Natural killer cell (primary cell): ENCODE measurements at regions of chr6 and their contacts with region 1.

Region 1: GRCh38 chr6:159098636-159099106 is 53.9 kb upstream of the TAGAP start:
- DNase-seq: peak; percentile 56 to 92
- ATAC-seq: peak; percentile 88 to 89 (median 89)
- H3K4me3 ChIP-seq: no peak overlapping the region
- H3K4me3 Mint-ChIP-seq: peak overlapping the region; percentile 61
- H3K27ac ChIP-seq: peak overlapping the region; percentile 92
- H3K27ac Mint-ChIP-seq: peak overlapping the region; percentile 94 to 99
- H3K4me1 ChIP-seq: peaks cover 42% of the 10 kb centered on the region
- H3K4me1 Mint-ChIP-seq: peaks cover 26 to 31% of the 10 kb centered on the region in 2 donors
- H3K27me3 ChIP-seq: no peaks in the 10 kb centered on the region
- H3K27me3 Mint-ChIP-seq: no peaks in the 10 kb centered on the region
- CTCF ChIP-seq: no peak

Region 2: GRCh38 chr6:159062564-159062945 is 36.1 kb before region 1 on chr6:
- intact Hi-C with region 1: loop called (anchors 2 kb)
- DNase-seq: peak; percentile 49 to 88
- ATAC-seq: peak; percentile 78 to 88 (median 86)
- H3K4me3 ChIP-seq: no peak overlapping the region
- H3K4me3 Mint-ChIP-seq: peak overlapping the region; percentile 72
- H3K27ac ChIP-seq: peak overlapping the region; percentile 98
- H3K27ac Mint-ChIP-seq: peak overlapping the region; percentile 94 to 99
- H3K4me1 ChIP-seq: peaks cover 47% of the 10 kb centered on the region
- H3K4me1 Mint-ChIP-seq: peaks cover 72 to 73% of the 10 kb centered on the region in 2 donors
- H3K27me3 ChIP-seq: no peaks in the 10 kb centered on the region
- H3K27me3 Mint-ChIP-seq: no peaks in the 10 kb centered on the region
- CTCF ChIP-seq: no peak

Region 3: DNA sequence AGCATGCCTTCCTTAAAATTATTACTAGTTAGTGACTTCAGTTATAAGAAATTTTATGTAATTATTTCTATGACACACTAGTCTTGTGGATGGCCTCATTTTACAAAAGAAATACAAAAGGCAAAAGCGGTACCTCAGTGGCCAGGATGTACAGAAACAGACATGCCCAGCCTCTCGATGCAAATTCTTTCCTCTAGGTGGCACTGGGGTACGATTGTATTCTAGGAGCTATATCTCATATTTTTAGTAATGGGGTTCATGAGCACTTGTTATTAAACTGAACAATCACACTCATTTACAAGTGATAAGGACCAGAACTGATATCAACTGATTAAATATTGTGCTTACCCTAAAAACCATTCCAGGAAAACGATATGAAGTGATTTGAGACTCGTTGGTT is 534.5 kb after region 1 on chr6:
- intact Hi-C with region 1: no loop called
- DNase-seq: no peak
- ATAC-seq: no peak
- H3K4me3 ChIP-seq: no peak overlapping the region
- H3K4me3 Mint-ChIP-seq: no peak overlapping the region
- H3K27ac ChIP-seq: no peak overlapping the region
- H3K27ac Mint-ChIP-seq: no peak overlapping the region
- H3K4me1 ChIP-seq: no peaks in the 10 kb centered on the region
- H3K4me1 Mint-ChIP-seq: no peaks in the 10 kb centered on the region
- H3K27me3 ChIP-seq: no peaks in the 10 kb centered on the region
- H3K27me3 Mint-ChIP-seq: no peaks in the 10 kb centered on the region
- CTCF ChIP-seq: no peak